ENCODE measurements at regions of chrX and their contacts with region 1.

Region 1: DNA sequence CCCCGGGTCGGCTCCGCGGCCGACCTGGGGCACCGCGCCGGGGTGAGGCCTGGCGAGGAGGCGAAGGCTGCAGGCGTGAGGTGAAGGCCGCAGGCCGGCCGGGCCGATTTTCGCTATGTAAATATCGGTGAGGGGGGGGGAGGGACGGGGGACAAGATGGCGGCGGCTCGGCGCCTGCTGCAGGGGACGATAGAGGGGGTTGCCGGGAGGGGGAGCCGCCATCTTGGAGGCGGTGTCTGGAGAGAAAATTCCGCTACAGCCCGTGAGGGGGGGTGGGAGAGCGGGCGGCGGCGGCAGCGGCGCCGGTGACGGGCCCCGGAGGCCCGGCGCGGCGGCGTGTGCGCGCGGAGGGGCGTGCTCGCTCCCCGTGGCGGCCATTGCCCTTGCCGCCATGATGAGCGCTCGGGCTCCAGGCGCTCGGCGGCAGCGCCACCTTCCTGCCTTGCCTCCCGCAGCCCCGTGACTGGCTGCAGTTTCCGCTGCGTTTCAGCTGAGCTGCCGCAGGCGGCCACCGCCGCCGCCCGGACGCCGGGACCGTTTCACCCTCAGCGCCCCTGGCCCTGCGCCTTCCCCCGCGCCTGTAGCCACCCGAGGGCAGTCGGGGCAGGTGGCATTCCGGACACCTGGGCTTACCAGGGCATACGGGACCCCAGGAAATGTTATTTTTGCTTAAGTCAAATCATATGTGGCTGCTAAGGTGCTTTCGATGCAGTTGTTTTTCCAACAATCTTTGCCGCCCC is 692 bp downstream of the ZFX start:
- DNase-seq: peak; percentile 89
- H3K4me3 Mint-ChIP-seq: peak overlapping the region; percentile 80
- H3K27ac Mint-ChIP-seq: peak overlapping the region; percentile 89
- H3K4me1 Mint-ChIP-seq: peaks cover 56% of the 10 kb centered on the region
- H3K27me3 Mint-ChIP-seq: no peaks in the 10 kb centered on the region

Region 2: DNA sequence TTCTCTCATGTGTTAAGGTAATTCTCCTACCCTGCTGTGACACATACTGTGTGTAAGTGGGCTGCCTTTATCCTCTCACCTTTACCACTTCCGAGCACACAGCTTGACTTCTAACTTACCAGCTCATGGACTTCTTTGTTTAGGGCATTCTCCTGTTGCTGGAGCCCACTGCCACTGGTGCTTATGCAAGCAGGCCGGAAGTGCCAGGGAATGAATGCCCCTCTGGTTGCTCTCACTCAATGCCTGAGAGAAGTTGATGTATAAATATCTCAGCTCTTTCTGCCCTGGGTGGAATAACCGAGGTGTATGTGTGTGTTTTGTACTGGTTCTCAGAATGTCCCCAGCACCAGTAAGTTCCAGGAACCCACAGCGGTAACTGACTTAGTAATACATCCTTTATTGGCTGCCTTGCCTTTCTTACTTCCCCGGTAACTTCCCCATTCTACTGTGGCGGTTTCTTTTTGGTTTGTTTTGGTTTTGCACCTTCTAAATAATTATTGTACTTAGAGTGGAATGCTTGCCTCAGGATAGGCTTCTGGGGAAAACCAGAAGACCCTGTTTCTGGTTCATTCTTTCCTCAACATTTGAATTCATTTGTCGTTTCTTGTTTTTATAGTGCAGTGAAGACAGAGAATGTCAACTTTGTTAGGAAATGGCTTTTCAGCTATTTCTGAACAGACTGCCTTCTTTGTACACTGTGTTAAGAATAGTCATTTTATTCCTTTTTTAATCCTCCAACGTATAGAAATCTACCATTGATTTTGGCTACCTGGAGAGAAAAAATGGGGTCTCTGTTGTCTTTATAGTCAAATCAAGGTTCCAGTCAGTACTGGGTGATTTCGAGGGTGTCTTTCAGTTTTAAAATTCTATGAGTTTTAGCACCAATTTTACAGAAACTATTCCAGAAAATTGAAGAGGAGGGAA is 197.0 kb before region 1 on chrX:
- CTCF ChIA-PET with region 1: no interaction called
- intact Hi-C with region 1: loop called (anchors 2 kb)
- DNase-seq: peak; percentile 70
- H3K4me3 Mint-ChIP-seq: peak overlapping the region; percentile 79
- H3K27ac Mint-ChIP-seq: peak overlapping the region; percentile 97
- H3K4me1 Mint-ChIP-seq: peaks cover 16% of the 10 kb centered on the region
- H3K27me3 Mint-ChIP-seq: no peaks in the 10 kb centered on the region

Region 3: GRCh38 chrX:24054182-24055042 is 95.8 kb before region 1 on chrX and contains the start of gene EIF2S3:
- CTCF ChIA-PET with region 1: interaction called, 3 read pairs
- intact Hi-C with region 1: loop called (anchors 1 kb)
- DNase-seq: peak; percentile 87
- H3K4me3 Mint-ChIP-seq: no peak within 1 kb of the TSS
- H3K27ac Mint-ChIP-seq: no peak within 1 kb of the TSS
- H3K4me1 Mint-ChIP-seq: peaks cover 10% of the 10 kb centered on the region
- H3K27me3 Mint-ChIP-seq: no peaks in the 10 kb centered on the region
- total RNA-seq, gene EIF2S3: 366 to 386 TPM

Region 4: GRCh38 chrX:24241822-24242648 is 91.8 kb after region 1 on chrX:
- CTCF ChIA-PET with region 1: no interaction called
- intact Hi-C with region 1: loop called (anchors 1 kb)
- DNase-seq: peak; percentile 12
- H3K4me3 Mint-ChIP-seq: no peak overlapping the region
- H3K27ac Mint-ChIP-seq: no peak overlapping the region
- H3K4me1 Mint-ChIP-seq: peaks cover 11% of the 10 kb centered on the region
- H3K27me3 Mint-ChIP-seq: no peaks in the 10 kb centered on the region

Region 5: DNA sequence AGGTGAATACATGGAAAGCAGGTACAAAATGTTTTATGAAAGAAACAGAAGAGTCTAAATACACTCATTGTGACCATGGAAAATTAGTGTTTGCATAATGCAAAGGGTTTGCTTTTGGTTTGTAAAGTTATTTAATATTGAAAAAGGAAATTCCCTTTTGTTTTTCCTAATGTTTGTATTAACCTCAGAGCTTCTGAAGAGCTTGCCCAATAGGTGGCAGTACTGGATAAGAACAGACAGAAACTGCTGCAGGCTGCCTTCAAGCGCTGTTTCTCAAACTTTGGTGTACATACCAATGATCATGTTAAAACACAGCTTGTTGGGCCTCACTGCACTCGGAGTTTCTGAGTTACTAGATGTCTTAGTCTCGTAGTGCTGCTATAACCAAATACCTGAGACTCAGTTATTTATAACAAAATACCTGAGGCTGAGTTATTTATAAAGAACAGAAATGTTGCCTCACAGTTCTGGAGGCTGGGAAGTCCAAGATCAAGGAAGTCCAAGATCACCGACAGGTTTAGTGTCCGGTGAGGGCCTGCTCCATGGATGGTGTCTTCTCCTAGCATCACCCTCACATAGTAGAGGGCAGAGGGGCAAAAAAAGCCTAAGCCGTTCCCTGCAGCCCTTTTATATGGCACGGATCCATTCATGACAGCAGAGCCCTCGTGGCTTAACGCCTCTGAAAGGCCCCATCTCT is 109.5 kb after region 1 on chrX:
- CTCF ChIA-PET with region 1: no interaction called
- intact Hi-C with region 1: no loop called
- DNase-seq: peak; percentile 52
- H3K4me3 Mint-ChIP-seq: no peak overlapping the region
- H3K27ac Mint-ChIP-seq: no peak overlapping the region
- H3K4me1 Mint-ChIP-seq: peaks cover 14% of the 10 kb centered on the region
- H3K27me3 Mint-ChIP-seq: no peaks in the 10 kb centered on the region

Region 6: GRCh38 chrX:24693453-24694202 is 543.4 kb after region 1 on chrX and contains the start of gene POLA1:
- CTCF ChIA-PET with region 1: no interaction called
- intact Hi-C with region 1: loop called (anchors 2 kb)
- DNase-seq: peak; percentile 81
- H3K4me3 Mint-ChIP-seq: peak within 1 kb of the TSS; percentile 90
- H3K27ac Mint-ChIP-seq: peak within 1 kb of the TSS; percentile 88
- H3K4me1 Mint-ChIP-seq: peaks cover 17% of the 10 kb centered on the region
- H3K27me3 Mint-ChIP-seq: no peaks in the 10 kb centered on the region
- total RNA-seq, gene POLA1: 38.2 to 38.7 TPM

Measured in activated naive CD4-positive, alpha-beta T cell treated with anti-CD3 and anti-CD28 coated beads for 36 hours (primary cell).